Colonic mucosa (tissue), 4 donors: ENCODE measurements at regions of chr11 and their contacts with region 1.

Region 1: DNA sequence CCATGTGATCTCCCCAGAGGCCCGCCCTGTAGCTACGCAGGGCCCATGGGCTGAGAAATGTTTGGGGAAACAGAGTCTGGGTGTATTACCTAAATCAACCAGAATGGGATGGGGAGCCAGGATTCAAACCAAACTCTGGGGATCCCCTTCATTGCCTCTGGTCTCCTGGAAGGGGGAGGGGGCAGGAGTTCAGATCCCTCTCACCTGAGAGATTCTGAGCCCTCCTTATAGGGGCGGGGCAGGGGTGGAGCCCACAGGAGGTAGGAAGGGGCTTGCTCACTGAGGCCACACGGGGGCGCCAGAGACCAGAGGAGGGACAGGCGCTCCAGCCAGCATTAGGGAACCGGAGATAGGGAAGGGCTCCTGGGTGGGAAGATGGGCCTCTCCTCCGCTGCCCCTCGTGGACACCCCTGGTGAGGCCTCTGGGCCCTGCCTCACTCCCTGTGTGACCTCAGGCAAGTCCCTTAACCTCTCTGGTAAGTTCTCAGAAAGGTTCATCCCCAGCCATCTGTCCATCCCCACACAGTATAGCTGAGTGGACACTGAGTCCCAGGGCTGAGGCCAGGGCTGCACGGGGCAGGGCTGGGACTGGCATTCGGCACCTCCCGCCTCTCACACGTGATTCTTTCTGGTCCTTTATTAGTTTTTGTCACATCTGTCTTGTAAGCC is 2.7 kb upstream of the CDC42BPG start:
- DNase-seq: peak; percentile 98
- H3K4me3 ChIP-seq: no peak overlapping the region
- H3K27ac ChIP-seq: peak overlapping the region; percentile 1
- H3K4me1 ChIP-seq: peaks cover 21% of the 10 kb centered on the region
- H3K27me3 ChIP-seq: no peaks in the 10 kb centered on the region
- CTCF ChIP-seq: peak; percentile 94

Region 2: GRCh38 chr11:64787526-64788320 is 59.4 kb before region 1 on chr11:
- intact Hi-C with region 1: loop called (anchors 5 kb)
- DNase-seq: peak; percentile 80
- H3K4me3 ChIP-seq: no peak overlapping the region
- H3K27ac ChIP-seq: no peak overlapping the region
- H3K4me1 ChIP-seq: no peaks in the 10 kb centered on the region
- H3K27me3 ChIP-seq: no peaks in the 10 kb centered on the region
- CTCF ChIP-seq: peak; percentile 53

Region 3: GRCh38 chr11:64879244-64879900 is 32.2 kb after region 1 on chr11:
- intact Hi-C with region 1: no loop called
- DNase-seq: peak; percentile 49
- H3K4me3 ChIP-seq: peak overlapping the region; percentile 94
- H3K27ac ChIP-seq: peak overlapping the region; percentile 88
- H3K4me1 ChIP-seq: peaks cover 18% of the 10 kb centered on the region
- H3K27me3 ChIP-seq: no peaks in the 10 kb centered on the region
- CTCF ChIP-seq: no peak

Region 4: DNA sequence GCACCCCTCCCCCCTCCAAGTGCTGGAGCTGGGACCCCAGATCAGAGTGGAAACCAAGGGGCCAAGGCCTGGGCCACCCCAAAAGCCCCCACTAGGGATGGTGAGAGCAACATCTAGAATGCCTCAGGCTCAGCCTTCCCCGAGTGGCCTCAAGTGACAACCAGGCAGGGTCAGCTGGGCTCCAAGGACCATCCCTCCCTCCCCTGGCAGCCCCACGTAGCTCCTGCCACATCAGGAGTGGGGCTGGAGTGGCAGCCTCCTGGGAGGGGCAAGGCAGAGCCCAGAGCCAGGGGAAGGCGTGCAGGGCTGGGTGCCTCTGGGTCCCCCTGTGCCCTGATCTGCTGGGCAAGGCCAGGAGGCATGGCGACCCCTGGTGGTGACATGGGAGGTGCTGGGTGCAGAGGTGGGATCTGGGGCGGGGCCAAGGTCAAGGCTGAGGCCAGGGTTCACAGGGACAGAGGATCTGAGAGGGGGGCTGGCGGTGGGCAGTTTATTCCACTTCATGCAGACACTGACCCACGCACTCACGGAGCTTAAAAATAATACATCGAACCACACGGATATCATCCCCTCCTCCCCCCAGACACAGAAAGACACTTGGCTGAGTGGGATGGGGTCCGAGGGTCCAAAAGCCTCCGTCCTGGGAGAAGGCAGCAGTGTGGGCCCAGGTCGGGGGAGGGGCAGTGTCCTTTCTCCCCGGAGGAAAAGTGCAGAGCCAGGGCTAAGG is 47.1 kb after region 1 on chr11:
- intact Hi-C with region 1: loop called (anchors 1 kb)
- DNase-seq: peak; percentile 96
- H3K4me3 ChIP-seq: peak overlapping the region; percentile 68
- H3K27ac ChIP-seq: peak overlapping the region; percentile 94
- H3K4me1 ChIP-seq: no peaks in the 10 kb centered on the region
- H3K27me3 ChIP-seq: no peaks in the 10 kb centered on the region
- CTCF ChIP-seq: peak; percentile 96

Region 5: DNA sequence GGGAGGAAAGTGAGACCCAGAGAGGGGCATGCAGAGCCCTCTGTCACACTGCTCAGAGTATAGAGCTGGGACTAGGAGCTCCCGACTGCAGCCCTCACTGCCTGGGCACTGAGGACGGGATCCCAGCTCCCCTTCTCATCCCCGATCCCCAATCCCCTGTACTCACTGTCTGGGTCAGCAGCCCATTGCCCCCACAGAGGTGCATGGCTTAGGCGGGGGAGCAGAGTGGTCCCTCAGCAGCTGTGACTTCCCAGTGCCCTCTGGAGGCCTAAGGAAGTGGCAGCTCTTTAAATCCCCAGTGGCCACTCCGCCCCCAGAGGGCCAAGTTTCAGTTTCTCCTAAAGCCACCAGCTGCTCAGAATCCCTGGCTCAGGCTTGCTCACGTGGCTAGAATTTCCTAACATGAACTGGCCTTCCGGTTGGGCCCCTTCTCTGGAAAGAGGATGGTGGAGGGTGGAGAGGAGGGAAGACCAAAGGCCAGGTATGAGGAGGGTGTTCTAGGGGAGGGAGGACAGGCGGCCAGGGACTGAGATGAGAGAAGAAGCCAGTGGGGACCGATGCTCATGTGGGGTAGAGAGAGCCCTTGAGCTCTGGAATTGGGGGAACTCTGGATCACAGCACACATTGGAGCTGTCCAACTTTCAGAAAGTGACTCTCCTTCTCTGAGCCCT is 149.7 kb after region 1 on chr11 and contains the start of gene BATF2:
- intact Hi-C with region 1: loop called (anchors 5 kb)
- DNase-seq: peak; percentile 91
- H3K4me3 ChIP-seq: peak within 1 kb of the TSS; percentile 49
- H3K27ac ChIP-seq: peak within 1 kb of the TSS; percentile 91
- H3K4me1 ChIP-seq: peaks cover 14% of the 10 kb centered on the region
- H3K27me3 ChIP-seq: no peaks in the 10 kb centered on the region
- CTCF ChIP-seq: peak; percentile 44
- total RNA-seq, gene BATF2: 14.1 to 20.7 TPM

Region 6: DNA sequence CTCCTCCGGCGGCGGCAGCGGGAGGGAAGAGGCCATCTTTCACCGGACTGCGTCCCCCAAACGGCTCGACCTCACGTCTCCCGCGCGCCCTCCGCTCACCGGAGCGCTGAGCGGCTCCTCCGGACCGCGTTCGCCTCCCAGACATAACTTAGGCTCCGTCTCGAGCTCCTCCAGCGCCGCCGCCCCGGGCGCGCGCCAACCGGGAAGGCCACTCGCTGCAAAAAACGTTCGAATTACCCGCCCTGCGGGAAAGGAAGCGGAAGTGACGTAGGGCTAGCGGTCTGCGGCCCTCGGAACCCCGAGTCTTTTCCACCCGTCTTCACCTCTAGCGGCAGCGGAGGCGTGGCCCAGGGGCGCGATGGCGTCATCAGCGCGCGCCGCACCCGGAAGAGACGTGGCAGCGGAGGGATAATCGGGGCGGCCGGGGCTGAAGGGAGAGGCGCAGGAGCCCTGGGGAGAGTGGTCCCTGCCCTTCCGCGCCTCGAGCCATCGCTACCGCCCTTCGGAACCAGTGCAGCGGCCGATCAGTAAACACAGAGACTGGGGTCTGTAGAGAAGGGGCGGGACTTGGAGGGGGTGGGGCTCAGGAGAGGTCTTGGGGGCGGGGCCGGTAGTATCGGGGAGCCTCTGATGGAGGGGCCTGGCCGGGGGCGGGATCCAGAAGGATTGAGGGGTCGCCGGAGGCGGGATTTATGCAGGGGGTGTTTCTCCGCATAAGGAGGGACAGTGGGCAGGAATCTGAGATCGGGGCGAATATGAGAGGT is 236.9 kb after region 1 on chr11 and contains the starts of genes CDCA5 and ZFPL1:
- intact Hi-C with region 1: loop called (anchors 10 kb)
- DNase-seq: peak; percentile 96
- H3K4me3 ChIP-seq: peak within 1 kb of the TSS; percentile 89
- H3K27ac ChIP-seq: peak within 1 kb of the TSS; percentile 77
- H3K4me1 ChIP-seq: peaks cover 13% of the 10 kb centered on the region
- H3K27me3 ChIP-seq: no peaks in the 10 kb centered on the region
- CTCF ChIP-seq: no peak
- total RNA-seq, gene CDCA5: 9.7 to 51.7 TPM
- total RNA-seq, gene ZFPL1: 43.2 to 54.3 TPM

Region 7: GRCh38 chr11:65117216-65118096 is 270.3 kb after region 1 on chr11 and contains the start of gene ZNHIT2:
- intact Hi-C with region 1: loop called (anchors 5 kb)
- DNase-seq: peak; percentile 100
- H3K4me3 ChIP-seq: peak within 1 kb of the TSS; percentile 70
- H3K27ac ChIP-seq: peak within 1 kb of the TSS; percentile 71
- H3K4me1 ChIP-seq: peaks cover 23% of the 10 kb centered on the region
- H3K27me3 ChIP-seq: no peaks in the 10 kb centered on the region
- CTCF ChIP-seq: peak; percentile 71
- total RNA-seq, gene ZNHIT2: 8.1 to 17.3 TPM